HepG2 (cell line): ENCODE measurements at regions of chr6 and their contacts with region 1.

Region 1: DNA sequence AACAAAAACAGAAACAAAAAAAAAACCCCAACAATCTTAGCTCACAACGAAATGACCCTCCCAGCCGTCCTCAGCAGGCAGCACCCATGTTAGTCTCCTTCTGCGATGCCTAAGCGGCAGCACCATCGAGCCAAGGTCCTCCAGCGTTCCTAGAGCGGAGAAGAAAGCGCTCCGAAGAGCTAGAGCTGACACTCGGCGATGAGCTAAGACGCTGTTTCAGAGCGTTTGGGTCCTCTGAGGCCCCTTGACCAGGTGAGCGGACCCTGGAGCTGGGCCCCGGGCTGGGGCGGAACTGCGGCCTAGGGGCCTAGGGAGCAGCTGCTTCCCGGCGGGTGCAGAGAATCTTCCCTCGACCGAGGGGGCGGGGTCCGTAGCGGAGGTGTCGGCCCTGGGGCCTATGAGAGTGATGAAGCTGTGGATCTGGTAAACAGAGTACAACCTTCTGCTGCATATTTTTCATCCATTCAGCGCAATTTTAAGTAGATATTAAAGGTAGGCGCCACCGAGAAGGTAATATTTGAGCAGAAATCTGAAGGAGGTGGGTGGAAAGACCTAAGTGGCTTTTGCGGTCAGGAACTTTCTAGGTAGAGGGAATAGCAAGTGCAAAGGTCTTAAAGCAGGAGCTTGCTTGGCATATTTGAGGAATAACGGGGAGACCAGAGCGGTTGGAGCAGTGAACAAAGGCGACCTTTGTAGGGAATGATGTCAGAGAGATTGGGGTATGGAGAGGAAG is at the start of gene ZSCAN26:
- DNase-seq: peak; percentile 83
- ATAC-seq: peak; percentile 99
- H3K4me3 ChIP-seq: peak within 1 kb of the TSS; percentile 85 to 91 (median 87)
- H3K27ac ChIP-seq: peak within 1 kb of the TSS; percentile 51
- H3K4me1 ChIP-seq: peaks cover 26% of the 10 kb centered on the region
- H3K27me3 ChIP-seq: peaks cover 0 to 11% of the 10 kb centered on the region in 2 experiments; a peak in 3 of 5 replicates
- CTCF ChIP-seq: peak; percentile 22; the same call in 1 of the 2 replicates
- EP300 ChIP-seq: peak; percentile 3 to 44; a peak in 1 of 4 replicates
- POLR2A ChIP-seq: peak; percentile 79 to 81
- RAD21 ChIP-seq: no peak; the same call in 1 of the 2 replicates
- total RNA-seq, gene ZSCAN26: 15.6 and 18.5 TPM in 2 replicates

Region 2: DNA sequence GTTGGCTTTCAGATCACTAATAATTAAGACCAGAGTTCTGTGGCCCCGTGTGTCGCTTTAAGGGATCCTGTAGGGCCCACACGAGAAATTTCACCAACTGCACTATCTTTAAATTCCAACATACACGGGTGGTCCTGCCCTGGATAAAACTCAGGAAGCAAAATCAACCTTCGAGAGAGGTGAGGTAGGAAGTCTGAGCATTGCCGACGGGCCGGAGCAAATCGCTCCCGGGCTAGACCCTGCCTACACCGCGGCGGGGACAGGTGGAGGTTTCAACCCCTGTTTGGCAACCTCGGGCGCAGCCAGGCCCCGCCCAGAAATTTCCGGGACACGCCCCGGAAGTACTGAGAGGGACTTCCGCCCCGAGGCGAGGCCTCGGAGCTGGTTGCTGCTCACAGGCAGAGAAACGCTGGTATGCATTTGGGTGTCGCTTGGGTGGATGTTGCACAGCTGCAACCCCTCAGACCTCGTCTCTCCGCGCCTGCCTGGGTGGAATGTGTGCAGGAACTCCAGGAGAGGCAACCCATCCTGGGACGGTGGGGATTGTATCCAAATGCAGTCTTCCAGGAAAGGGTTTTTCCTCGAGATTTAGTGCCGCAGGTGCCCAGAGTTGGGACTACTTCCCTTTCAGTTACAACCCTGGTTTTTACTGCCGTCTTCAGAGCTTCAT is 105.6 kb before region 1 on chr6:
- CTCF ChIA-PET with region 1: no interaction called
- POLR2A ChIA-PET with region 1: interaction called, 10 read pairs
- in situ Hi-C with region 1: no loop called
- intact Hi-C with region 1: no loop called
- DNase-seq: peak; percentile 79
- ATAC-seq: peak; percentile 98
- H3K4me3 ChIP-seq: peak overlapping the region; percentile 65 to 82 (median 74)
- H3K27ac ChIP-seq: peak overlapping the region; percentile 50
- H3K4me1 ChIP-seq: peaks cover 13% of the 10 kb centered on the region
- H3K27me3 ChIP-seq: no peaks in the 10 kb centered on the region; a peak in 1 of 5 replicates
- CTCF ChIP-seq: peak; percentile 13; the same call in 1 of the 2 replicates
- EP300 ChIP-seq: no peak
- POLR2A ChIP-seq: peak; percentile 92 to 99
- RAD21 ChIP-seq: peak; percentile 56

Region 3: DNA sequence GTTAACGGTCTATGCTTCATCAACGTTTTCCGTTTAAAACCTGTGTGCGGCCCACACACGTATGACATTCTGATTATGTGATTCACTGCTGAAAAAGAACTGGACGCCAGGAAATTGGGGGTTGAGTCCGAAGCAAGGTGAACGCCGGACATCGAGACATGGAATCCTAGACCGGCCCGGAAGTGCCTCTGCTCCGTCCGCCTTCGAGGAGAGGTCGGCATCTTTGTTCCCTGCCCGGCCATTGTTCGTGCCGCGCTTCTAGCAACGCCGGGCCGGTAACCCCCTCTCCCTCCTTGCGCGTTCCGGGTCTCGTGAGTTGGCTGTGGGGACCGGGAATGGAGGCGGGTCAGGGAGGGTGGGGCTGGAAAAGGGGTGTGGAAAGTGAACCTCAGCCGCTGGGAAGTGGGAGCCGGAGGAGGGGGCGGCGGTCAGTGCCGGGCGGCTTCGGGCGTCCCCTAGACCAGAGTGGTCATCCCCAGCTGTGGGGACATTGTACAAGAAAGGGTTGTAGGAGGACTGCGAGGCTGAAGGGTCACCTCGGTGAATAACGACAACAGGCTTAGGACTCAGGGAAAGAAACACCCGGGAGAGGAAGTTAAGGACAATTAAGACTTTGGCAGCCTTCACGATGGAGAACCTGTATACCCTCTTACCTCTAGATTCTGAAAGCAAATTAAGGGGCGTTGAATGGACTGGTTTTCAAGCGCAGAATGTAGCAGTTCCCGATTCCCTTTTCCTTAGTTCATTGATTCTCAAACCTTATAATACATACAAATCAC is 41.9 kb before region 1 on chr6 and contains the start of gene ZSCAN9:
- CTCF ChIA-PET with region 1: no interaction called
- POLR2A ChIA-PET with region 1: interaction called, 4 read pairs
- in situ Hi-C with region 1: no loop called
- intact Hi-C with region 1: loop called (anchors 1 kb)
- DNase-seq: peak; percentile 86
- ATAC-seq: peak; percentile 97
- H3K4me3 ChIP-seq: peak within 1 kb of the TSS; percentile 91 to 99 (median 99)
- H3K27ac ChIP-seq: peak within 1 kb of the TSS; percentile 55
- H3K4me1 ChIP-seq: peaks cover 24% of the 10 kb centered on the region
- H3K27me3 ChIP-seq: no peaks in the 10 kb centered on the region; a peak in 2 of 5 replicates
- CTCF ChIP-seq: peak; percentile 35
- EP300 ChIP-seq: no peak
- POLR2A ChIP-seq: peak; percentile 79 to 81
- RAD21 ChIP-seq: peak; percentile 45; the same call in 1 of the 2 replicates
- total RNA-seq, gene ZSCAN9: 17.2 and 17.8 TPM in 2 replicates

Region 4: DNA sequence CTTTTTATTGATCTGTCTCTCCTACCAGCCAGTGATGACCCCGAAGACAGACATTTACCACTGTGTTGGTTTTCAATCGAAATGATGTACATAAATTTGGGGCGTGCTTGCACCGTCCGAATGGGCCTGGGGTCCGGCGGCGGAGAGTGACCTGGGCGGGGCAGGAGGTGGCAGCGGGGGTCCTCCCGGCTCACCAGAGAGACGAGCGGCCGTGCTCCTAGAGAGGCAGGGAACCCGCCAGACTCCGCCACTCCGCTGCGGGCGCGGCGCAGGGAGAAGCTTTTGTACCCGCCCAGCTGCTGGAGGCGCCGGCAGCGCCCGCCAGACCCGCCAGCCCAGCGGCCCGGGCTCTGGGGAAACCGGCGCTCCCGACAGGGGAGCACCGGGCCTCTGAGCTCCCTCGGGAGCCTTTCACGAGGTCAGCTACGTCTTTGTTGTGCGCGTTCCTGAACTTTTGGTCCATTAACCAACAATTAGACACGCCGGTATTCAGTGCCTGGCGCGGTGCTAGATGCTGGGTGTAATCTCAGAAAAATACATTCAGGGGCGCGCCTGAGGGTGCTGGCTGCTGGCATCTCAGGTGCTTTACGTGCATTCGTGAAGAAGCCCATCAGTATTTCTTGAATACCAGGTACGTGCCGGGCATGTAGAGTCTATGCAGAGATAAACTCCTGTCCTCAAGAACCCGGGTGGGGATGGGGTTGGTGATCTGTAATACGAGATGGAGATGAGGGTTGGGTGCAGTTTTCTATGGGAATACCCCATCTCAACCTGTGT is 14.3 kb after region 1 on chr6 and contains the start of gene PGBD1:
- CTCF ChIA-PET with region 1: no interaction called
- POLR2A ChIA-PET with region 1: interaction called, 42 read pairs
- in situ Hi-C with region 1: no loop called
- intact Hi-C with region 1: no loop called
- DNase-seq: peak; percentile 67
- ATAC-seq: peak; percentile 99
- H3K4me3 ChIP-seq: peak within 1 kb of the TSS; percentile 79 to 94 (median 89)
- H3K27ac ChIP-seq: peak within 1 kb of the TSS; percentile 42
- H3K4me1 ChIP-seq: peaks cover 16% of the 10 kb centered on the region
- H3K27me3 ChIP-seq: no peaks in the 10 kb centered on the region; a peak in 1 of 5 replicates
- CTCF ChIP-seq: peak; percentile 39
- EP300 ChIP-seq: peak in 1 of 2 experiments; percentile 5; a peak in 1 of 4 replicates
- POLR2A ChIP-seq: peak; percentile 71 to 72
- RAD21 ChIP-seq: peak; percentile 76
- total RNA-seq, gene PGBD1: 6.9 and 8.5 TPM in 2 replicates

Region 5: DNA sequence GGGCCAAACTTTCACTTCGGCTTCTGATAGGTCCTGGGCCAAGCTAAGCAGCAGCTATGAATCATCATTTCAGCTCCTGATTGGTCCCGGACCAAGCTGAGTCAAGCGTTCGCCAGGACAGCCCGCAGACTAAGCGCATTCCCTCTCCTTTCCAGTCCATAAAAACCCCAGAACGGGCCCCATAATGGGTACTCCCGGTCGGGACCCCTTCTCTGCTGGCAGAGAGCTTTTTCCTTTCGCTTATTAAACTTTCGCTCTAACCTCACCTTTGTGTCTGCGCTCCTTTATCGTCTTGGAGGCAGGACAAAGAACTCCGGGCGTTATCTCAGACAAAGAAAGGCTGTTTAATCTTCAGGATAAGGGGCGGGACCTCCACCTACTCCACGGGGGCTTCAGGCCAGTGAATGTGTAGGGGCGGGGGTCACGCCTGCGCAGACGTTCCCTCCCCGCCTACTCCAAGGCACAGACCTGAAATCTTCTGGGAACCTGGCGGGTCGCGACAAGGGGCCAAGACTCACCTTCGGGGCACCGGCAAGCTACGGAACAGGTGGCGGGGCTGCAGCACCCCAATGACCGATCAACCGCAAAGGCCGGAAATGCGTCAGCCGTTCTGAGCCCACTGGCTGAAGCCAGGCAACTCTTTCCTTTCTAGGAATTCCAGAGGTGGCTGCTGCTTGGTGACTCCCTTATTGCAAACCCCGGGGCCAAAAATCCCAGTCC is 68.6 kb after region 1 on chr6 and contains the start of gene ZSCAN31:
- CTCF ChIA-PET with region 1: no interaction called
- POLR2A ChIA-PET with region 1: interaction called, 45 read pairs
- in situ Hi-C with region 1: no loop called
- intact Hi-C with region 1: no loop called
- DNase-seq: peak; percentile 99
- ATAC-seq: peak; percentile 98
- H3K4me3 ChIP-seq: peak within 1 kb of the TSS; percentile 78 to 94 (median 80)
- H3K27ac ChIP-seq: peak within 1 kb of the TSS; percentile 96
- H3K4me1 ChIP-seq: peaks cover 25% of the 10 kb centered on the region
- H3K27me3 ChIP-seq: no peaks in the 10 kb centered on the region; a peak in 1 of 5 replicates
- CTCF ChIP-seq: no peak; the same call in 1 of the 2 replicates
- EP300 ChIP-seq: peak; percentile 18 to 34; a peak in 1 of 4 replicates
- POLR2A ChIP-seq: peak; percentile 80 to 99
- RAD21 ChIP-seq: 0 out of 2 replicates have a peak, but pooled peaks have one; percentile 17
- total RNA-seq, gene ZSCAN31: 6.2 and 7.2 TPM in 2 replicates

Region 6: DNA sequence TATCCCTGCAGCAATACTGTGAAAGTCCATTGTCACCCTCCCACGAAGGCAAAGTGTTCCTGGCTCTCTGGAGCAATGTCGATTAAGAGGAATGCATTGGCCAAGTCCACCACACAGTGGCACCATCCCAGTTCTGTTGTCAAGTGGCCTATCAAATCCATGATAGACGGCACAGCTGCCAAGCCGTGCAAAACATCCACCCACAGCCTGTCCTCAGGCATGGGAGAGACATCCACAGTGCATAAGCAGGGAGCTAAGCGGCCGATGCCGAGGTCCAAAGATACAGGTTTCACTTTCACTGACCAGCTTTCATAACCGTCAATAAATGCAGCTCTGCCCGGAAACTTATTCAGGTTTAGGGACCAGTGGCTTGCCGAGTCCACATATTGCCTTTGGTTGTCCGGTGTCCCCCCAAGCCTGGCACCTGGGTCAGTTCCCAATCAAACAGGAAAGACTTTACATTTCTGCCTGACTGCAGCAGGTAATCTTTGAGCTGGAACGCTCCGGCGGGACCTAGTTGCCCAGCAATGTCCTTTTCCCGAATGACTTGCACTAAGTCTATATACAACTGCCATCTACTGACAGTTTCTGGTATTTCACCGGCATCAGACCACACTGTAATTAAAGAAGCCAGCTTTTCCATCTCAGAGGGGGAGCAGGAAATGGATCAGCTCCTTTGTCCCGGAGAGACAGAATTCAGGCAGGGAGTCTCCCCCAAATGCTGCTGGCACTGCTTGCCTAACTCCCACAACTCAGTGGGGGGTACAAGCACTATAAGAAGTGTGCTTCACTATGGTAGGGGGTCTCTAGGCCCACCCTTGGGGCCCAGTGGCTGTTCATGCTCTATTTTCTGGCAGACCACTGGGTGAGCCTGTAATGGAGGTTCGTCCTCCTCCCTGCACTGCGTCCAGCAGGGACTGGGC is 88.9 kb after region 1 on chr6:
- CTCF ChIA-PET with region 1: no interaction called
- POLR2A ChIA-PET with region 1: interaction called, 21 read pairs
- in situ Hi-C with region 1: no loop called
- intact Hi-C with region 1: loop called (anchors 1 kb)
- DNase-seq: peak; percentile 90
- ATAC-seq: peak; percentile 89
- H3K4me3 ChIP-seq: peak overlapping the region; percentile 70 to 82 (median 77)
- H3K27ac ChIP-seq: peak overlapping the region; percentile 75
- H3K4me1 ChIP-seq: peaks cover 33% of the 10 kb centered on the region
- H3K27me3 ChIP-seq: no peaks in the 10 kb centered on the region; a peak in 1 of 5 replicates
- CTCF ChIP-seq: peak; percentile 91
- EP300 ChIP-seq: no peak
- POLR2A ChIP-seq: peak in 1 of 2 experiments; percentile 65; a peak in 1 of 4 replicates
- RAD21 ChIP-seq: peak; percentile 81

Region 7: DNA sequence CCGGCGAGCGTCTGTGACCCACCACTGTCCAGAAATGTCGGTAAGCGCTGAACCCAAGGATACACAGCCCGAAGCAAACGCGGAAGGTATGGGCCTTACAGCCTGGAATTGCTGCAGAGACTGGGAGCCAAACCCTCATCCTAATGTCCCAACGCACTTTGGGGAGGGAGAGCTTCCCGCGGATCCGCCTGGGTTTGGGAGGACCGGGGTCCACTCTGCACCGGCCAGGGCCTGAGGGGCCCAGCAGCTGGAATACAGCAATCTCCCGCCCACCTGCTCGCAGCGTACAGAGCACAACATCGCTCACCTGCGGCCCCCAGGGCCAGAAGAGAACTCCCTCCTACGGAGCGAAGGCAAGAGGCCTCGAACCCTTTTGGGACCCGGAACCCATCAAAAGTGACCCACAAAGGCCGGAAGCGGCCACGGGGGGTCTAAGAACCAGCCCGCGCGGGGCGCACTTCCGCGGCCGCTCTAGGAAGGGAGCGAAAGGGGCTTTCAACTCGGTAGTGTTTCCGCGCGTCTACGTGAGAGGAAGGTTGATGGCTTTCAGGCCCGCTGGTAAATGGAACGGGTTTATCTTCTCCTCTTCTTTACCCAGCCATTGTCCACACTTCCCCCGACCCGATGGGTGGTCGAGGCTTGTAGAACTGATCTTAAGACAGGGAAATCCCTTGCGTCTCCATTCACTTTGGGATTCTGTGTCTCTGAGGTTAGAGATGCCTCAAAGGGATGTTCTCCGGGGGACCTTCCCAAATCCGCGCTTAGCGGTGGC is 132.4 kb after region 1 on chr6 and contains the start of gene ZSCAN12:
- CTCF ChIA-PET with region 1: no interaction called
- POLR2A ChIA-PET with region 1: no interaction called
- in situ Hi-C with region 1: no loop called
- intact Hi-C with region 1: loop called (anchors 1 kb)
- DNase-seq: peak; percentile 86
- ATAC-seq: peak; percentile 98
- H3K4me3 ChIP-seq: peak within 1 kb of the TSS; percentile 82 to 99 (median 94)
- H3K27ac ChIP-seq: peak within 1 kb of the TSS; percentile 68
- H3K4me1 ChIP-seq: peaks cover 49% of the 10 kb centered on the region
- H3K27me3 ChIP-seq: no peaks in the 10 kb centered on the region; a peak in 1 of 5 replicates
- CTCF ChIP-seq: peak; percentile 94
- EP300 ChIP-seq: peak in 1 of 2 experiments; percentile 64; a peak in 3 of 4 replicates
- POLR2A ChIP-seq: peak; percentile 83 to 90
- RAD21 ChIP-seq: peak; percentile 67
- total RNA-seq, gene ZSCAN12: 8.9 and 9.8 TPM in 2 replicates